ENCODE measurements at regions of chr6 and their contacts with region 1.

Region 1: GRCh38 chr6:145963216-145964068 is 716 bp downstream of the SHPRH start:
- DNase-seq: no peak
- ATAC-seq: peak; percentile 3
- H3K4me3 ChIP-seq: peak overlapping the region; percentile 71 to 89 (median 80)
- H3K4me3 Mint-ChIP-seq: peak overlapping the region; percentile 97
- H3K27ac ChIP-seq: peak overlapping the region; percentile 81 to 85
- H3K27ac Mint-ChIP-seq: peak overlapping the region; percentile 97
- H3K4me1 ChIP-seq: peaks cover 14 to 18% of the 10 kb centered on the region in 2 donors
- H3K4me1 Mint-ChIP-seq: peaks cover 47% of the 10 kb centered on the region
- H3K27me3 ChIP-seq: no peaks in the 10 kb centered on the region
- H3K27me3 Mint-ChIP-seq: no peaks in the 10 kb centered on the region
- CTCF ChIP-seq: no peak

Region 2: GRCh38 chr6:144095331-144096002 is 1868.0 kb before region 1 on chr6 and contains the start of gene SF3B5:
- CTCF ChIA-PET with region 1: no interaction called
- POLR2A ChIA-PET with region 1: no interaction called
- intact Hi-C with region 1: loop called (anchors 10 kb)
- DNase-seq: peak; percentile 99
- ATAC-seq: peak; percentile 97
- H3K4me3 ChIP-seq: peak within 1 kb of the TSS; percentile 63 to 98 (median 73)
- H3K4me3 Mint-ChIP-seq: peak within 1 kb of the TSS; percentile 100
- H3K27ac ChIP-seq: peak within 1 kb of the TSS; percentile 77 to 84
- H3K27ac Mint-ChIP-seq: peak within 1 kb of the TSS; percentile 100
- H3K4me1 ChIP-seq: peaks cover 16 to 22% of the 10 kb centered on the region in 2 donors
- H3K4me1 Mint-ChIP-seq: peaks cover 23% of the 10 kb centered on the region
- H3K27me3 ChIP-seq: no peaks in the 10 kb centered on the region
- H3K27me3 Mint-ChIP-seq: no peaks in the 10 kb centered on the region
- CTCF ChIP-seq: no peak
- total RNA-seq, gene SF3B5: 104 and 111 TPM in 2 replicates

Region 3: GRCh38 chr6:144659202-144660182 is 1304.0 kb before region 1 on chr6:
- CTCF ChIA-PET with region 1: no interaction called
- POLR2A ChIA-PET with region 1: no interaction called
- intact Hi-C with region 1: loop called (anchors 10 kb)
- DNase-seq: peak; percentile 43
- ATAC-seq: no peak
- H3K4me3 ChIP-seq: no peak overlapping the region
- H3K4me3 Mint-ChIP-seq: peak overlapping the region; percentile 75
- H3K27ac ChIP-seq: peak overlapping the region; percentile 36 to 76
- H3K27ac Mint-ChIP-seq: peak overlapping the region; percentile 83
- H3K4me1 ChIP-seq: peaks cover 34 to 42% of the 10 kb centered on the region in 2 donors
- H3K4me1 Mint-ChIP-seq: peaks cover 70% of the 10 kb centered on the region
- H3K27me3 ChIP-seq: no peaks in the 10 kb centered on the region
- H3K27me3 Mint-ChIP-seq: no peaks in the 10 kb centered on the region
- CTCF ChIP-seq: no peak

Region 4: GRCh38 chr6:145734486-145735355 is 228.7 kb before region 1 on chr6:
- CTCF ChIA-PET with region 1: interaction called, 7 read pairs
- POLR2A ChIA-PET with region 1: interaction called, 14 read pairs
- intact Hi-C with region 1: loop called (anchors 1 kb)
- DNase-seq: peak; percentile 79
- ATAC-seq: peak; percentile 70
- H3K4me3 ChIP-seq: peak overlapping the region; percentile 12 to 90 (median 74)
- H3K4me3 Mint-ChIP-seq: peak overlapping the region; percentile 97
- H3K27ac ChIP-seq: peak overlapping the region; percentile 65 to 98
- H3K27ac Mint-ChIP-seq: peak overlapping the region; percentile 96
- H3K4me1 ChIP-seq: peaks cover 14 to 30% of the 10 kb centered on the region in 2 donors
- H3K4me1 Mint-ChIP-seq: peaks cover 31% of the 10 kb centered on the region
- H3K27me3 ChIP-seq: no peaks in the 10 kb centered on the region
- H3K27me3 Mint-ChIP-seq: no peaks in the 10 kb centered on the region
- CTCF ChIP-seq: no peak

Region 5: DNA sequence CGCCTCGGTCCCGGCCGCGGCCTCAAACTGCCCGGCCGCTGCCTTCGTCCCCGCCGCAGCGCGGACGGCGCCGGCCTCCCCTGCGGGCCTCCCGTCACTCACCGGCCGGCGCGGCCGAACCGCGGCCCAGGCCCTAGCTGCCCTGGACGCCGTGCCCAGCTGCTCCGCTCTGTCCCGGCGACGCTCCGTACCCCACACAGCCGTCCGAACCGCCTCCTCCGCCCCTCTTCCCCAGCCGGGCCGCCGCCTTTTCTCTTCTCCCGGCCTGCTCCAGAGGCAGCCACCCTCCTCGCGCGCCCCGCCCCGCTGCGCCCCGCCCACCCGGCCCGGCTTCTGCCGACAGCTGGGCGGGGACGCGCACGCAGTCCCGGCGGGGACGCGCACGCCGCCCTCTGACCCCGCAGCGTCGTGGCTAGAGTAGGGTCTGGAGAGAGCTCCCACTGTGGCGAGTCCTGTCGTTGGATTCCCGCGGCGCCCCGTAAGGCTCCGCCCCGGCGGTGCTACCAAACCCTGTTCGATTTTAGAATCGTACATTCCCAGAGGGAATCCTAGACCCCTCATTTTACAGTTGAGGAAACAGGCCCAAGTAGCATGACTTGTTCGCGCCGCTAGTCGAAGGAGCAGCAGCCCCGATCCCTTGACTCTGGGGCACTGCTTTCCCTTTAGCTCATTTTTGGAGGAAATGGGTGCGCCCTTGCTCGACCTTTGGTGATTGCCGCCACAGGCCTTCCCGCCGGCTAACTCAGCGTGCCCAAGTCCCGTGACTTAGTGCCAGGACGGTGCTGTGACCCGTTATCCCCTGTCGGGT is 148.7 kb before region 1 on chr6 and contains the start of gene FBXO30:
- CTCF ChIA-PET with region 1: interaction called, 4 read pairs
- POLR2A ChIA-PET with region 1: interaction called, 13 read pairs
- intact Hi-C with region 1: loop called (anchors 1 kb)
- DNase-seq: peak; percentile 93
- ATAC-seq: peak; percentile 91
- H3K4me3 ChIP-seq: peak within 1 kb of the TSS; percentile 60 to 94 (median 90)
- H3K4me3 Mint-ChIP-seq: peak within 1 kb of the TSS; percentile 96
- H3K27ac ChIP-seq: peak within 1 kb of the TSS; percentile 76 to 89
- H3K27ac Mint-ChIP-seq: peak within 1 kb of the TSS; percentile 96
- H3K4me1 ChIP-seq: peaks cover 26 to 32% of the 10 kb centered on the region in 2 donors
- H3K4me1 Mint-ChIP-seq: peaks cover 44% of the 10 kb centered on the region
- H3K27me3 ChIP-seq: no peaks in the 10 kb centered on the region
- H3K27me3 Mint-ChIP-seq: no peaks in the 10 kb centered on the region
- CTCF ChIP-seq: peak; percentile 18
- total RNA-seq, gene FBXO30: 9.7 and 10.2 TPM in 2 replicates

Region 6: GRCh38 chr6:145865175-145865574 is 98.3 kb before region 1 on chr6:
- CTCF ChIA-PET with region 1: no interaction called
- POLR2A ChIA-PET with region 1: interaction called, 3 read pairs
- intact Hi-C with region 1: loop called (anchors 2 kb)
- DNase-seq: peak; percentile 30
- ATAC-seq: no peak
- H3K4me3 ChIP-seq: peak overlapping the region in 1 of 5 experiments; percentile 6
- H3K4me3 Mint-ChIP-seq: peak overlapping the region; percentile 41
- H3K27ac ChIP-seq: peak overlapping the region; percentile 60 to 85
- H3K27ac Mint-ChIP-seq: peak overlapping the region; percentile 82
- H3K4me1 ChIP-seq: peaks cover 45 to 46% of the 10 kb centered on the region in 2 donors
- H3K4me1 Mint-ChIP-seq: peaks cover 51% of the 10 kb centered on the region
- H3K27me3 ChIP-seq: no peaks in the 10 kb centered on the region
- H3K27me3 Mint-ChIP-seq: no peaks in the 10 kb centered on the region
- CTCF ChIP-seq: no peak

Region 7: DNA sequence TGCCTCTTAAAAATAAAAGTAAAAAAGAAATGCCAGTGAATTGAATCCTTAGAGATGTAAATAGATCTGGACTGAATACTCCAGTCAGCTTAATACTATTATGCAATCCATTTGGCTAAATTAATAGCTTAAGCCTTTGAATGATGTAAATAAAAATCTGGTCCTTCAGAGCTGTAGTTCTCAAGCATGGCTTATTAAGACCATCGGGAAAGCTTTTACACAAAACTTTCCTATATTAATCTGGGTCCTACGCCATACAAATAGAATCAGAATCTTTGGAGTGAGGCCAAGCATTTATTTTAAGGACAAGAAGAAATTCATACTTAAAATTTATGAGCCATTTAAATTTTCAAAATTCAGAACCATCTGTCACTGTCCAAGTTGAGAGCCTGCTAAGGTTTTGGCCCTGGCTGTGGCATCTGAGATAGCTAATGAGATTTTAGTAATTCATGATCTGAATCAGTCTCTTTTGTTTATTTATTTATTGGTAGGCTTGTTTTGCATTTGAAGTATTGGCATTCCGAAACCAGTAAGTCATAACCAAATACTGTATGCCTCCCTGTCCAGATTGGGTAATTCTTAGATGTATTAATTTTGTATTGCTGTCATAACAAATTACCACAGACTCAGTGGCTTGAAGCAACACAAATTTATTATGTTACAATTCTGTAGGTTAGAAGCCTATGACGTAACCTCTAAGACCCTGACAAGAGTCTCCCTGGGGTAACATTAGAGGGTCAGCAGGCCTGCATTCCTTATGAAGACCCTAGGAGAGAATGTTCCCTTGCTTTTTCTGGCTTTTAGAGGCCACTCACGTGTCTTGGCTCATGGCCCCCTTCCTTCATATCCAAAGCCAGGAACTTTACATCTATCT is 352.2 kb after region 1 on chr6:
- CTCF ChIA-PET with region 1: no interaction called
- POLR2A ChIA-PET with region 1: no interaction called
- intact Hi-C with region 1: no loop called
- DNase-seq: no peak
- ATAC-seq: no peak
- H3K4me3 ChIP-seq: no peak overlapping the region
- H3K4me3 Mint-ChIP-seq: no peak overlapping the region
- H3K27ac ChIP-seq: no peak overlapping the region
- H3K27ac Mint-ChIP-seq: no peak overlapping the region
- H3K4me1 ChIP-seq: no peaks in the 10 kb centered on the region
- H3K4me1 Mint-ChIP-seq: no peaks in the 10 kb centered on the region
- H3K27me3 ChIP-seq: no peaks in the 10 kb centered on the region
- H3K27me3 Mint-ChIP-seq: no peaks in the 10 kb centered on the region
- CTCF ChIP-seq: no peak

Region 8: GRCh38 chr6:146433881-146434731 is 470.7 kb after region 1 on chr6:
- CTCF ChIA-PET with region 1: no interaction called
- POLR2A ChIA-PET with region 1: no interaction called
- intact Hi-C with region 1: no loop called
- DNase-seq: no peak
- ATAC-seq: no peak
- H3K4me3 ChIP-seq: no peak overlapping the region
- H3K4me3 Mint-ChIP-seq: no peak overlapping the region
- H3K27ac ChIP-seq: no peak overlapping the region
- H3K27ac Mint-ChIP-seq: no peak overlapping the region
- H3K4me1 ChIP-seq: no peaks in the 10 kb centered on the region
- H3K4me1 Mint-ChIP-seq: no peaks in the 10 kb centered on the region
- H3K27me3 ChIP-seq: peaks cover 0 to 4% (median 0%) of the 10 kb centered on the region in 4 experiments
- H3K27me3 Mint-ChIP-seq: peaks cover 13% of the 10 kb centered on the region
- CTCF ChIP-seq: no peak

Region 9: GRCh38 chr6:147202516-147203312 is 1239.3 kb after region 1 on chr6:
- CTCF ChIA-PET with region 1: no interaction called
- POLR2A ChIA-PET with region 1: no interaction called
- intact Hi-C with region 1: loop called (anchors 5 kb)
- DNase-seq: peak; percentile 94
- ATAC-seq: peak; percentile 78
- H3K4me3 ChIP-seq: peak overlapping the region; percentile 59 to 95 (median 92)
- H3K4me3 Mint-ChIP-seq: peak overlapping the region; percentile 93
- H3K27ac ChIP-seq: peak overlapping the region; percentile 72 to 97
- H3K27ac Mint-ChIP-seq: peak overlapping the region; percentile 95
- H3K4me1 ChIP-seq: peaks cover 17 to 22% of the 10 kb centered on the region in 2 donors
- H3K4me1 Mint-ChIP-seq: peaks cover 27% of the 10 kb centered on the region
- H3K27me3 ChIP-seq: no peaks in the 10 kb centered on the region
- H3K27me3 Mint-ChIP-seq: no peaks in the 10 kb centered on the region
- CTCF ChIP-seq: no peak

Measured in B cell (primary cell).